GM12878 (cell line): ENCODE measurements at regions of chr16 and their contacts with region 1.

Region 1: DNA sequence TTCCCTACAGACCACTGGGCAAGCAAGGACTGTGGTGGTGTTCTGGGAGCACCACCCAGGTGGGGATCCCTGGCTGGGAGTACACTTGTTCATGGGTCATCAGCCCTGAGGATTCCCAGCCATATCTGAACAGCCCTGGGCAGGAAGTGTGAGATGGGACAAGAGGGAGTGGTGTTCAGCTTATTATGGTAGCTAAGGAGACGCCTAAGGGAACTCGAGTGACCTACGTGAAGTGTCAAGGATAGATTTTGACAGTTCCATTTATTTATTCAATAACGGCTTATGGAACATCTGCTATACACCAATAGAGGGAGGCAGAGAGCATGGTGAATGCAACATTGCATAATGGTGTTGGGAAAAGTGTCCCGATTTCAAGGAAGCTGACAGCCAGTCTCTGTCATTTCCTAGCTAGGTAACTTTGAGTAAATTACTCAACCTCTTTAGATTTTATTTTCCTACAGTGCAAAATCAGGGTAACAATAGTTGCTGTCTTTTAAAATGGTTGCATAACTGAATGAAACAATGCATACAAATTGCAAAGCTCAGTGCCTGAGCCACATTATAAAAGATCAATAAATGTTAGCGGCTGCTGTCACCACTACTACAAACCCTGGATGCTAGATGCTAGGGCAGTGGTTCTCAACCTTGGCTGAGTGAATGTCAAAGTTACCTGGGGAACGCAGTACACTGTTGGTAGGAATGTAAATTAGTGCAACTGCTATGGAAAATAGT is 534.1 kb downstream of the GRIN2A start:
- DNase-seq: no peak
- ATAC-seq: peak; percentile 70
- H3K4me3 ChIP-seq: no peak overlapping the region
- H3K27ac ChIP-seq: no peak overlapping the region
- H3K4me1 ChIP-seq: no peaks in the 10 kb centered on the region
- H3K27me3 ChIP-seq: no peaks in the 10 kb centered on the region
- CTCF ChIP-seq: peak; percentile 69 to 75 (median 73); a peak in 5 of 6 replicates
- EP300 ChIP-seq: no peak
- POLR2A ChIP-seq: no peak
- RAD21 ChIP-seq: peak; percentile 76

Region 2: DNA sequence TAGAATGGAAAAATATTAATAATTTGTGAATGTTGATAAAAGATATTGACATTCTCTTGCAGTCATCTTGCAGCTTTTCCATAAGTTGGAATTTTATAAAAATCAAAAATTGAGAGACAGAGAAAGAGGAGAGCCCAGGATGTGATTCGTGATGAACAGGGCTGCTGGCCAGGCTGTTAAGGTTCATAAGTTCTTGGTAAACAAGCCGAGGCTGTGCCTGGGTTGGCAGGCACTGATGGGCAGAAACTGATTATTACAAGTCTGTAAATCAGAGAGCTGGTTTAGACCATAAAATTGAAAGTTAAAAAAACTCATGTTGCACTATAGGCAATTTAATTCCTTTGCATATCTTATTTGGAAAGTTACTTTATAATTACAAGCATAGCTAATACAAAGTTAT is 23.0 kb before region 1 on chr16:
- CTCF ChIA-PET with region 1: no interaction called
- POLR2A ChIA-PET with region 1: no interaction called
- RAD21 ChIA-PET with region 1: no interaction called
- SMC1A ChIA-PET with region 1: no interaction called
- in situ Hi-C with region 1: no loop called
- intact Hi-C with region 1: no loop called
- DNase-seq: no peak
- ATAC-seq: no peak
- H3K4me3 ChIP-seq: no peak overlapping the region
- H3K27ac ChIP-seq: no peak overlapping the region
- H3K4me1 ChIP-seq: no peaks in the 10 kb centered on the region
- H3K27me3 ChIP-seq: no peaks in the 10 kb centered on the region
- CTCF ChIP-seq: no peak
- EP300 ChIP-seq: no peak
- POLR2A ChIP-seq: no peak
- RAD21 ChIP-seq: no peak

Region 3: GRCh38 chr16:9801651-9802050 is 153.5 kb after region 1 on chr16:
- CTCF ChIA-PET with region 1: no interaction called
- POLR2A ChIA-PET with region 1: no interaction called
- RAD21 ChIA-PET with region 1: no interaction called
- SMC1A ChIA-PET with region 1: no interaction called
- in situ Hi-C with region 1: no loop called
- intact Hi-C with region 1: no loop called
- DNase-seq: no peak
- ATAC-seq: peak; percentile 92
- H3K4me3 ChIP-seq: no peak overlapping the region
- H3K27ac ChIP-seq: no peak overlapping the region
- H3K4me1 ChIP-seq: peaks cover 2% of the 10 kb centered on the region; the same call in 1 of the 2 replicates
- H3K27me3 ChIP-seq: no peaks in the 10 kb centered on the region
- CTCF ChIP-seq: no peak
- EP300 ChIP-seq: no peak
- POLR2A ChIP-seq: no peak
- RAD21 ChIP-seq: no peak

Region 4: DNA sequence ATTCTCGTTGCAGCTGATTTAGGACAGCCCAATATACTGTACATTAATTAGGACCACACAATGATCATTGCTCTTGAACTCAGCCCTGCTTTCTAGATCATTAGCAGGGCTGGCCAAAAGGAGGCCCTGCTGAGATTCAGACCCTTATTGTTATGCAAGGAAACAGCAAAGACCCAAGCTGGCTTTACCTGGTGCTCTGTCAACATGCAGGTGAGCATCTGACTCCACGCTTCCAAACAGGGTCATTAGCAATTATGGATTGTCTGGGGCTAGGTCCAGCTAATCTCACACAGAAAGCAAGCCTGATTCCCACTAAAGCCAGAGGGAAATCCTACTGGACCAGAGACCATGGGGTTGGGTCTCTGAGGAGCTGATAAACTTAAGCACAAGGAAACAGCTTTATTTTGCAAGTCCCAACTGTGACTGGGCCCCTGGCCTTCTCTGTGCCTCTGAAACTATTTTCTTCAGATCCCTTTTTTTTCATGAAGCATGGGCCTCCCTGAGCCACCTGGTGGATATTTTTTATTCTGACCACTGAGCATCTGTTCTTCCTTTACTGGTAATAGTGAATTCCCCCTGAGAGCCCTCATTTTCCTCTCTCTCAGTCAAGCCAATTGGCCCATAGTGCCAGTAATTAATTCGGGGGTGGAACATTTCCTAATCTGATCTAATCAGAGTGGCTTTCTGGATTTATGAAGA is 298.0 kb after region 1 on chr16:
- CTCF ChIA-PET with region 1: interaction called, 17 read pairs
- POLR2A ChIA-PET with region 1: no interaction called
- RAD21 ChIA-PET with region 1: interaction called, 6 read pairs
- SMC1A ChIA-PET with region 1: interaction called, 6 read pairs
- in situ Hi-C with region 1: no loop called
- intact Hi-C with region 1: loop called (anchors 2 kb)
- DNase-seq: no peak
- ATAC-seq: peak; percentile 77
- H3K4me3 ChIP-seq: no peak overlapping the region
- H3K27ac ChIP-seq: no peak overlapping the region
- H3K4me1 ChIP-seq: no peaks in the 10 kb centered on the region
- H3K27me3 ChIP-seq: no peaks in the 10 kb centered on the region
- CTCF ChIP-seq: peak; percentile 29 to 34 (median 31); a peak in 4 of 6 replicates
- EP300 ChIP-seq: no peak
- POLR2A ChIP-seq: no peak
- RAD21 ChIP-seq: peak; percentile 66

Region 5: GRCh38 chr16:10039220-10040096 is 391.3 kb after region 1 on chr16:
- CTCF ChIA-PET with region 1: interaction called, 5 read pairs
- POLR2A ChIA-PET with region 1: no interaction called
- RAD21 ChIA-PET with region 1: interaction called, 10 read pairs
- SMC1A ChIA-PET with region 1: interaction called, 13 read pairs
- in situ Hi-C with region 1: no loop called
- intact Hi-C with region 1: no loop called
- DNase-seq: no peak
- ATAC-seq: peak; percentile 73
- H3K4me3 ChIP-seq: peak overlapping the region; percentile 60
- H3K27ac ChIP-seq: no peak overlapping the region
- H3K4me1 ChIP-seq: no peaks in the 10 kb centered on the region
- H3K27me3 ChIP-seq: no peaks in the 10 kb centered on the region
- CTCF ChIP-seq: peak; percentile 20 to 51 (median 32); a peak in 4 of 6 replicates
- EP300 ChIP-seq: no peak
- POLR2A ChIP-seq: no peak
- RAD21 ChIP-seq: peak; percentile 54

Region 6: GRCh38 chr16:10122546-10122945 is 474.4 kb after region 1 on chr16:
- CTCF ChIA-PET with region 1: interaction called, 10 read pairs
- POLR2A ChIA-PET with region 1: no interaction called
- RAD21 ChIA-PET with region 1: interaction called, 5 read pairs
- SMC1A ChIA-PET with region 1: interaction called, 5 read pairs
- in situ Hi-C with region 1: no loop called
- intact Hi-C with region 1: no loop called
- DNase-seq: no peak
- ATAC-seq: peak; percentile 21; the same call in 1 of the 3 replicates
- H3K4me3 ChIP-seq: no peak overlapping the region
- H3K27ac ChIP-seq: no peak overlapping the region
- H3K4me1 ChIP-seq: no peaks in the 10 kb centered on the region
- H3K27me3 ChIP-seq: no peaks in the 10 kb centered on the region
- CTCF ChIP-seq: peak; percentile 26 to 31 (median 27); a peak in 4 of 6 replicates
- EP300 ChIP-seq: no peak
- POLR2A ChIP-seq: no peak
- RAD21 ChIP-seq: peak; percentile 30